AG04450 (cell line): ENCODE measurements at regions of chr6 and their contacts with region 1.

Region 1: DNA sequence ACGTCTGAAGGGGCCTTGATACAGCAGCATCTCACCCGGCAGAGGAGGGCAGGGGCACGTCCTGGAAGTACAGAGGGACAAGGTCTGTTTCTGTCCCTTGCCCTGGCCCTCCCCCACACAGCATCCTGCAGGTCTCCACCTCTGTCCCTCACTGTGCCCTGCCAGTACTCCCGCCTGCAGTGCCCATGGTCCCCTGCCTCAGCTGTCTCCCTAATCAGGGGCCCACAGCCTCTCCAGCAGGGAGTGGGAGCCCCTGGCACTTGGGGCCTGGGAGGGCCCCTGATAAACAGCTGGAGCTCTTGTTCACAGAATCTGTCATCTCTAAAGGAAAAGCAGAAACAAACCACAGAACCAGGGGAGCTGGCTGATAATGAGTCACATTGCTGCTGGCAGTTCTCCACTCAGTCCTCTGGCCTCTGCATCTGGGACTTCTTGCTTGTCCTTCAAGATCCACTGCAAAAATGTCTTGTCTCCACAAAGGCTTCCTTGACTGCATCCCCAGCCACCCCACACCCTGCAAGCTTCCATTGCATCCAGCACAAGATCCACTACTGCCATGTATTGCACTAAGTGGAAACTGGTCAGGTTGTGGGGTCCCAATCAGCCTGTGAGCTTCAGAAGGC is 33.2 kb upstream of the TAF8 start:
- DNase-seq: peak; percentile 63
- H3K4me3 ChIP-seq: no peak overlapping the region
- H3K27ac ChIP-seq: peak overlapping the region; percentile 65
- H3K27me3 ChIP-seq: no peaks in the 10 kb centered on the region
- CTCF ChIP-seq: no peak

Region 2: DNA sequence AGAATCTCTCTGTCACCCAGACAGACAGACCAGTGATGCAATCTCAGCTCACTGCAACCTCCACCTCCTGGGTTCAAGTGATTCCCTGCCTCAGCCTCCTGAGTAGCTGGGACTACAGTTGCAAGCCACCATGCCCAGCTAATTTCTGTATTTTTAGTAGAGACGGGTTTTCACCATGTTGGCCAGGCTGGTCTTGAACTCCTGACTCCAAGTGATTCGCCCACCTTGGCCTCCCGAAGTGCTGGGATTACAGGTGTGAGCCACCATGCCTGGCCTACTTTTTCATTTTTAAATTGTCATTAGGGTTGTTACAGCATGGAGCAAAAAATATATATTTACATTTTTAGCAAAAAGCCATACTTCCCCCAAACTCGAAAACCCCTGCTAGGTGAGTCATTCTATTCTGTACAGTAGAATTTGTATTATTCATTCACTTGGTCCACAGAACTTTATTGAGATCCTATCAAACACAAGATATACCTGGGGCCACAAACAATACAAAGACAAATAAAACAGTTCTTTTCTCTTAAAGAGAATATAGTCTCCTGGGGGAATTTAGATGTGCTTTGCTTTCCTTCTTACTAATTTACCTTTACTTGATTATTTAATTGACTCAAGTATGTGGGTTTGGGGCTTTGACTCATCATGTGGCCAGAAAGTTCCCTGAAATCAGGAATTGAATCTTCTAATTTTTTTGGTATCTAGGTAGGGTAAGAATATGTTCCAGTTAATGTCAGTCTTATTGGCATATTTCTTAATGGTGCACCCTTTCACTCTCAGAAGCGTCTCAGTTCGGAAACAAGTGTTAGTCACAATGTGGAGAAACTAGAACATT is 58.9 kb before region 1 on chr6:
- CTCF ChIA-PET with region 1: no interaction called
- POLR2A ChIA-PET with region 1: no interaction called
- DNase-seq: no peak
- H3K4me3 ChIP-seq: no peak overlapping the region
- H3K27ac ChIP-seq: no peak overlapping the region
- H3K27me3 ChIP-seq: no peaks in the 10 kb centered on the region
- CTCF ChIP-seq: no peak

Region 3: DNA sequence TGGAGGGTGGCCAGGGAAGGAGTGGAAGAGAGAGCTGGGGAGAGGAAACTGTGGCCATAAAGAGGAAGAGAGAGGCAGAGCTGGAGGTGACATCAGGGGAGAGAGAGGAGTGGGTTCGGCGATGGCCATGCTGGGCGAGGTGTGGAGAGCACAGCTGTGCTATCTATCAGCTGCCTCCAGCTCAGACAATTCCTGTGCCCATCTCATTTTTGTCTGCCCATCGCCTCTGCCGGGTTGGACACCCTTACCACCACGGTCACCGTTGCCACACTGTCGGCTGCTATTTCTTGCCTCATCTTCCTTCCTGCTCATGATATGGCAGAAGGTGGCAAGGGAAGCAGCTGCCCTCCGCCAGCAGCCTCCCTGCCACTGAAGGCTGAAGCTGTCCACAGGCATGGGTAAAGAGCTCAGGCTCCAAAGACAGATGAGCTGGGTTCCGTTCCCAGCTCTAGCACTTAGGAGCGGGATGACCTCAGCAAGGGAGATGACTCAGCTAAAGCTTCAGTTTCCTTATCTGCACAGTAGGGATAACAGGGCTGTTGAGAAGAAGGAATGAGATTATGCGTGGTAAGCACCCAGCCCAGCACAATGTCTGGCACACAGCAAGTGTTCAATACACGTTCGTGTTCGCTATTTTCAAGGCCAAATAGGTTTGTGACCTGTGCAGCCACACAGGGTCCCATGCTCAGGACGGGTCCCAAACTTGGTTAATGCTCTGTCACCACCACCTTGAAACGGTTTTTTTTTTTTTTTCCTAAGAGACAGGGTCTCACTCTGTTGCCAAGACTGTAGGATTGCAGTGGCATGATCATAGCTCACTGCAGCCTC is 11.3 kb after region 1 on chr6:
- CTCF ChIA-PET with region 1: no interaction called
- POLR2A ChIA-PET with region 1: interaction called, 10 read pairs
- DNase-seq: no peak
- H3K4me3 ChIP-seq: no peak overlapping the region
- H3K27ac ChIP-seq: no peak overlapping the region
- H3K27me3 ChIP-seq: no peaks in the 10 kb centered on the region
- CTCF ChIP-seq: no peak